Calu3 (cell line): ENCODE measurements at regions of chr18 and their contacts with region 1.

Region 1: DNA sequence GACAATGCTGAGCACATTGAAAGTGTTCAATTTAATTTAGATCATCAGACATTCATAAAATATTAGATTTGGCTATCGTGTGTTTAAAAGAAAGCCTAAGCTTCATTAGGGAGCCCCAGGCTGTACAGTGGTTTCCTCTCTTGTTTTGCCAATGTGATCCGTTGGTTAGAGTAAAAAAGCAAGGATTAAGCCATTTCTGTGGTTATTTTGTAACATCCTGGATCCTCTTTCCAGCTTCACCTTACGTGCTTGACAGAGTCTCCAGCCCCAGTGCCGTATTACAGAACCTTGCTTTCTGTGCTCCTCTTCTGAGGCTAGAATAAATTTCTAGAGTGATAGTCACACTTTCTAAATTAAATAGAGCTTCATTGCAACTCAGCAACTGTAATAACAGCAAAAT is 289.3 kb upstream of the LINC00305 start:
- DNase-seq: no peak
- H3K4me3 Mint-ChIP-seq: no peak overlapping the region
- H3K27ac Mint-ChIP-seq: no peak overlapping the region
- H3K4me1 Mint-ChIP-seq: no peaks in the 10 kb centered on the region
- H3K27me3 Mint-ChIP-seq: no peaks in the 10 kb centered on the region
- CTCF ChIP-seq: no peak

Region 2: GRCh38 chr18:64490207-64490606 is 52.0 kb after region 1 on chr18:
- CTCF ChIA-PET with region 1: no interaction called
- intact Hi-C with region 1: loop called (anchors 2 kb)
- DNase-seq: no peak
- H3K4me3 Mint-ChIP-seq: no peak overlapping the region
- H3K27ac Mint-ChIP-seq: no peak overlapping the region
- H3K4me1 Mint-ChIP-seq: no peaks in the 10 kb centered on the region
- H3K27me3 Mint-ChIP-seq: no peaks in the 10 kb centered on the region
- CTCF ChIP-seq: no peak